Ascending aorta (tissue), 2 donors: ENCODE measurements at regions of chr3 and their contacts with region 1.

Region 1: DNA sequence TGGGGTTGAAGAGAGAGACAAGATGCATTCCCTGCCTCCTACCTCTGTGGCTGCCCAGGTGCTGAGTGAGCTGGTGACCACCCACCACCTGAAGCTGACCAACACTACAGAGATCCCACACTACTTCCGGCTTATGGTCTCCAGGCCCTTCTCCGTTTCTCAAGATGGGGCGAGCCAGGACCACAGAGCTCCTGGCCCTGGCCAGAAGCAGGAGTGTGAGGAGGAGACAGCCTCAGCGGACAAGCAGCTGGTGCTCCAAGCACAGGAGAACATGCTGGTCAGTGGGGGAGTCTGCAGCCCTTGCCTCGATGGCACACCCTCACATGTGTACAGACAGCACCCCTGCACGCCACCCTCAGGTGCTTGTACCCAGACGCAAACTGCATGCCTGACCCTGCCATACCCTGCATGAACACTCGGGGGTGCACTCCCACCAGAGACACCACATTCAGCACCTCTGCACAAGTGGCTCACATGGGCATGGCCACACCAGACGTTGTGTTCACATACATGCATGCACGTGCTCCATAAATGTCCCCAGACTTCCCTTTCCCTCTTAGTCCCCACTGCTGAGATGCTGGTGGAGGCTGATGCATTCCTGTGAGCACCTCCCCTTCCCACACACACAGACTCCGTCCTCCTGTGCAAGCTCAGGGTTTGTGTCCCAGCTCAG is 19.0 kb downstream of the ACAA1 start:
- DNase-seq: peak in 1 of 2 donors; percentile 73
- H3K4me3 ChIP-seq: no peak overlapping the region
- H3K27ac ChIP-seq: no peak overlapping the region
- H3K4me1 ChIP-seq: no peaks in the 10 kb centered on the region
- H3K27me3 ChIP-seq: no peaks in the 10 kb centered on the region
- CTCF ChIP-seq: peak; percentile 50 to 66 (median 62)

Region 2: GRCh38 chr3:38479431-38480092 is 361.7 kb after region 1 on chr3:
- intact Hi-C with region 1: loop called (anchors 5 kb)
- DNase-seq: peak in 1 of 2 donors; percentile 84
- H3K4me3 ChIP-seq: no peak overlapping the region
- H3K27ac ChIP-seq: no peak overlapping the region
- H3K4me1 ChIP-seq: no peaks in the 10 kb centered on the region
- H3K27me3 ChIP-seq: no peaks in the 10 kb centered on the region
- CTCF ChIP-seq: peak; percentile 62 to 83 (median 78)